CD4-positive, alpha-beta T cell (primary cell): ENCODE measurements at regions of chr2 and their contacts with region 1.

Region 1: GRCh38 chr2:176096986-176097819 is 2.4 kb upstream of the HOXD12 start:
- DNase-seq: peak in 13 of 14 experiments; percentile 22 to 78 (median 46)
- ATAC-seq: peak; percentile 75
- H3K4me3 ChIP-seq: peak overlapping the region; percentile 52
- H3K4me3 Mint-ChIP-seq: peak overlapping the region; percentile 49
- H3K27ac ChIP-seq: no peak overlapping the region
- H3K27ac Mint-ChIP-seq: no peak overlapping the region
- H3K4me1 ChIP-seq: peaks cover 37% of the 10 kb centered on the region
- H3K4me1 Mint-ChIP-seq: peaks cover 36% of the 10 kb centered on the region
- H3K27me3 ChIP-seq: peaks cover 90 to 92% of the 10 kb centered on the region in 2 experiments
- H3K27me3 Mint-ChIP-seq: peaks cover 90% of the 10 kb centered on the region
- CTCF ChIP-seq: peak; percentile 62

Region 2: GRCh38 chr2:175251425-175252041 is 845.7 kb before region 1 on chr2:
- CTCF ChIA-PET with region 1: interaction called, 11 read pairs
- POLR2A ChIA-PET with region 1: no interaction called
- intact Hi-C with region 1: loop called (anchors 2 to 5 kb)
- DNase-seq: peak in 4 of 14 experiments; percentile 5 to 47 (median 31)
- ATAC-seq: no peak
- H3K4me3 ChIP-seq: no peak overlapping the region
- H3K4me3 Mint-ChIP-seq: no peak overlapping the region
- H3K27ac ChIP-seq: no peak overlapping the region
- H3K27ac Mint-ChIP-seq: no peak overlapping the region
- H3K4me1 ChIP-seq: no peaks in the 10 kb centered on the region
- H3K4me1 Mint-ChIP-seq: no peaks in the 10 kb centered on the region
- H3K27me3 ChIP-seq: peaks cover 2 to 14% of the 10 kb centered on the region in 2 experiments
- H3K27me3 Mint-ChIP-seq: peaks cover 60% of the 10 kb centered on the region
- CTCF ChIP-seq: peak; percentile 73

Region 3: DNA sequence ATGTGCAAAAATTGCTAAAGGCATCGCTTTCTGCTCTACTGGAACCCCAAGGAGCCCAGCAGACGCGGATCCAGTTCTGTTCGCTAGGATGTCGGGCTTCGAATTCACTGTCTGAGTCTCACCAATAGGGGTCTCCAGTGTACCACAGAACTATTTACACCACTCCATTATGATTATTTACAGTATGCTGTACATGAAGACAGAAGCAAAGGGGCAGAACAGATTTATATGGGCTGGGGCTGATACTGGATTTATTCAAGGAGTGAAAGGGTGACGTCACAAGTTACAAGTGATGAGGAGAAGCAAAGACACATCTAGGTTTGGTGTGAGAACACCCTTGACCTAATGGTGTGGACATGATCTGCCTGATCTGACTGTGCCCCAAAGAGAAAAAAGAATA is 730.4 kb before region 1 on chr2:
- CTCF ChIA-PET with region 1: no interaction called
- POLR2A ChIA-PET with region 1: no interaction called
- intact Hi-C with region 1: loop called (anchors 5 to 10 kb)
- DNase-seq: peak in 4 of 14 experiments; percentile 6 to 45 (median 34)
- ATAC-seq: peak; percentile 46
- H3K4me3 ChIP-seq: no peak overlapping the region
- H3K4me3 Mint-ChIP-seq: no peak overlapping the region
- H3K27ac ChIP-seq: no peak overlapping the region
- H3K27ac Mint-ChIP-seq: no peak overlapping the region
- H3K4me1 ChIP-seq: no peaks in the 10 kb centered on the region
- H3K4me1 Mint-ChIP-seq: no peaks in the 10 kb centered on the region
- H3K27me3 ChIP-seq: peaks cover 0 to 26% of the 10 kb centered on the region in 2 experiments
- H3K27me3 Mint-ChIP-seq: peaks cover 25% of the 10 kb centered on the region
- CTCF ChIP-seq: peak; percentile 15

Region 4: DNA sequence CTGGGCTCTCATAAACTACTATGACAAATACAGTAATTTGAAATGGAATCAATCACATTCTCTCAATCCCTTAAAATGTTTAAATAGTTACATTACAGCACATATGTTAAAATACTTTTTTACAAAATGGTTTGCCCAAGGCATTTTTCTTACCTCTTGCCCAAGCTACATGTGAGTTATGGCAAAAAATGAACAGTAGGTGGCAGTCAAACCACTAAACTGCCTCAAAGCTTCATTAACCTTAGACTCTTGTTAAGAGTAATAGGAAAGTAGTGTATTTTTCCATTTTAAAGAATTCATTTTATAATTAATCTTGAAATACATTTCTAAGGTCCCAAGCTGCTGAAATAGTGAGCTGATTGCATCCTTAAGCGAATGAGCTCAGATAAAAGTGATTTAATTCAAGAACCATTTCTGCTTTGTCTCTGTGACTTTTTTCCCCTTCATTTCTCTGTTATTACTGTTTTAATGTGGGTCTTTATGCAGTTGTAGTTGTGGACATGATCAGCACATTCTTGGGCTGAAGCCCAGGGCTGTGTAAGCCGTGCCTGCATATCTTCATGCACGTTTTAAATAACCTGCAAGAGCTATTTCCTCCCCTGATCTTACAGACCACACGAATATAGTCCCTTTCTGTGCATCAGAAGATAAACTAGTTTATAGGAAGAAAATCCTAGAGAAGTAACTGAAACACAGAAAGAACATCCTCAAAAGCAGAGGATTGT is 406.9 kb before region 1 on chr2:
- CTCF ChIA-PET with region 1: interaction called, 8 read pairs
- POLR2A ChIA-PET with region 1: interaction called, 7 read pairs
- intact Hi-C with region 1: loop called (anchors 1 kb)
- DNase-seq: peak in 4 of 14 experiments; percentile 18 to 67 (median 56)
- ATAC-seq: peak; percentile 55
- H3K4me3 ChIP-seq: no peak overlapping the region
- H3K4me3 Mint-ChIP-seq: no peak overlapping the region
- H3K27ac ChIP-seq: no peak overlapping the region
- H3K27ac Mint-ChIP-seq: no peak overlapping the region
- H3K4me1 ChIP-seq: no peaks in the 10 kb centered on the region
- H3K4me1 Mint-ChIP-seq: no peaks in the 10 kb centered on the region
- H3K27me3 ChIP-seq: peaks cover 8% of the 10 kb centered on the region in 2 experiments
- H3K27me3 Mint-ChIP-seq: peaks cover 50% of the 10 kb centered on the region
- CTCF ChIP-seq: peak; percentile 71

Region 5: DNA sequence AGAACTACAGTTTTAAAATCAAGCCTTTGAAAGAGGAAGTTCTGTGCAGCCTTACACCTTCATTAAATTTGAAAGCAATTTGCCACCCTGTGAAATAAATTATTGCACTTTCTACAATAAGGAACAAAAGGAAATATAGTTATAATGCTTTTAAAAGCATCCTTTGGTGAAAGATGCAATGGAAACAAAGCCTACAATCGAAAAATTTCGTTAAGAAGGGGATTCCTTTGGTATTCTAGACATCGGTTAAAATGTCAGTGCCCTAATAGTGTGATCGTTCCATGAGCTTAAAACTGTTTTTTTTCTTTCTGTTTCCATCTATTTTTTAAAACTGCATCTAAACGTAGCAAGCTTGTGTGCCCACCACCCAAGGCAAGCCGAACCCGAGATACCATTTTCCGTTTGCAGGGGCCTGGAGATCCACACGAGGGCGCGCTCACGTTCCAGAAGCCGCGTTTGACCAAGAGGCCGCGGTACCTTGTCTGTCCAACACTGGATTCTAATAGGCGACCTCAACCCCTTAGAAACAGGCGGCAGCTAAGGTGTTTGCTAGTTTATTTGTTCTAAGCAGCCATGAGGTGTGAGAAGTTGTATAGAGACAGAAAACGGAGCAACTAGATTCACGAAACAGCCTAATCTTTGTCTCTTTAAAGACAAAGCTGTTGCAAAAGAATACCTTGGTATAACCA is 13.9 kb after region 1 on chr2:
- CTCF ChIA-PET with region 1: interaction called, 3 read pairs
- POLR2A ChIA-PET with region 1: interaction called, 4 read pairs
- intact Hi-C with region 1: loop called in 1 of 2 experiments (anchors 2 kb)
- DNase-seq: no peak
- ATAC-seq: no peak
- H3K4me3 ChIP-seq: no peak overlapping the region
- H3K4me3 Mint-ChIP-seq: no peak overlapping the region
- H3K27ac ChIP-seq: no peak overlapping the region
- H3K27ac Mint-ChIP-seq: no peak overlapping the region
- H3K4me1 ChIP-seq: peaks cover 22% of the 10 kb centered on the region
- H3K4me1 Mint-ChIP-seq: peaks cover 19% of the 10 kb centered on the region
- H3K27me3 ChIP-seq: peaks cover 87 to 93% of the 10 kb centered on the region in 2 experiments
- H3K27me3 Mint-ChIP-seq: peaks cover 89% of the 10 kb centered on the region
- CTCF ChIP-seq: no peak

Region 6: DNA sequence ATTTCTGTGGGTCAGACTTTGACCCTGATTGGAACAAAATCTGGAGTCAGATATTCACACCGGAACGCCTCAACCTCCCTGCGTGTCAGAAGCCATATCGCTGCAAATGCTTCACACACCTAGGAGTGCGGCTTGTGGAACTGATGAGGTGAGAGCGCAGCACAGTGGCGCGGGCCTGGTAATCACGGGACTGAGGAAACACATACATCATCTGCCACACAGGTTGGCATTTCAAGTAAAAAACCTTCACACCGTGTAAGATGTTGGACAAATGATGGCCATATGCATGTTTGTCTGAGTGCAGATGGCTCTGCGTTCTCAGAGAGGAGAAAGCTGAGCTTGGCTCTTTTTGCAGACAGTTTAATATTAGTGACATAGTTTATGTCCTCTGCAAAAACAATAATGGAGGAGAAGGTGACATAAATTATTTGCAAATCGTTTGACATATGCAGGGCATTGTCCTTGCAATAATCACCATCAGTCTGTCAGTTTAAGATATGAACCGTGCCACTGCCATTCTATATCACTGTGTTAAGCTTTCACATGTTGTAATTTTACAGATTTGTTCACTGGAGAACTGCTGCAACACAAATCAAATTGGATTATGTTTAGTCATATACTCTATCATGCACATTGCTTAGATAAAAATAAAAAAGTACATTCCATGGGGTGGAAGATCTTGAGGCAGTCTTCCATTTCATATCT is 273.4 kb after region 1 on chr2:
- CTCF ChIA-PET with region 1: no interaction called
- POLR2A ChIA-PET with region 1: no interaction called
- intact Hi-C with region 1: no loop called
- DNase-seq: no peak
- ATAC-seq: no peak
- H3K4me3 ChIP-seq: no peak overlapping the region
- H3K4me3 Mint-ChIP-seq: no peak overlapping the region
- H3K27ac ChIP-seq: no peak overlapping the region
- H3K27ac Mint-ChIP-seq: no peak overlapping the region
- H3K4me1 ChIP-seq: no peaks in the 10 kb centered on the region
- H3K4me1 Mint-ChIP-seq: no peaks in the 10 kb centered on the region
- H3K27me3 ChIP-seq: no peaks in the 10 kb centered on the region
- H3K27me3 Mint-ChIP-seq: peaks cover 25% of the 10 kb centered on the region
- CTCF ChIP-seq: no peak